Ovary (tissue), 10 donors: ENCODE measurements at regions of chr14 and their contacts with region 1.

Region 1: DNA sequence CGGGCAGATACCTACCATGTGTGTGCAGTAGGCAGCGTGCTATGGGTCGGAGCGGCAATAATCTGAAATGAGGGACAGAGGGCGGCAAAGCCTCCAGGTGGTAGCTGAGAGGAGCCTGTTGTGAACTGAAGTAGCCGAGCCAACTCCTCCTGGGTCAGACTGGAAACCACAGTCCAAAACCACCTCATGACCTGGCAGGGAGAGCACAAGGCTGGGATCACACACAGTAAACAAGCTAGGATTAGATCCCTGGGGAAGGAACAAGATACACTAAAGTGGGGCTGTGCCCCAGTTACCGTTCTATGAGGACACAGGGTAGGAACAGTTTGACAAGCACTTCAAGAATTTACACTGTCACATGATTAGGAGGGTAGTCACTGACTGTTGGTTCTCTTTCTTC is 49.0 kb downstream of the AREL1 start:
- DNase-seq: no peak
- H3K4me3 ChIP-seq: no peak overlapping the region
- H3K27ac ChIP-seq: no peak overlapping the region
- H3K4me1 ChIP-seq: no peaks in the 10 kb centered on the region
- H3K27me3 ChIP-seq: no peaks in the 10 kb centered on the region
- CTCF ChIP-seq: no peak
- EP300 ChIP-seq: no peak
- POLR2A ChIP-seq: no peak

Region 2: DNA sequence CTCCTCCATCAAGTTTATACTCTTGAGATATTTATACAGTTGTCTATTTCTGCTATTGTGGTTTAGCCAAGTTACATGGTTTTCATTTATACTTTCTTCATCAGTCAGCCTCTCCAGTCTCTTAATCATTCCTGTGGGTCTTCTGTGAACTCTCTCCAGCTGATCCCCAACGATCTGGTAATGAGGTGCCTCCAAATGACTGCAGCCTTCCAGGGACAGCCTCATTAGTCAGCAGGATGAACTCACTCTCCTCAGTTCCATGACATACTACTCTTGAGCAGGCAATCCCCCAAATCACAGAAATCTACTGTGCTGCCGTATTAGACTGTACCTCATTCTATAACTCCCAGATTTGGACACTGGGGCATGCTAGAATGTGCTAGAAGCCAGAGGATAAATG is 33.7 kb after region 1 on chr14:
- intact Hi-C with region 1: loop called in 2 of 4 experiments (anchors 5 to 10 kb)
- DNase-seq: no peak
- H3K4me3 ChIP-seq: no peak overlapping the region
- H3K27ac ChIP-seq: no peak overlapping the region
- H3K4me1 ChIP-seq: peaks cover 7% of the 10 kb centered on the region
- H3K27me3 ChIP-seq: no peaks in the 10 kb centered on the region
- CTCF ChIP-seq: no peak
- EP300 ChIP-seq: no peak
- POLR2A ChIP-seq: no peak

Region 3: DNA sequence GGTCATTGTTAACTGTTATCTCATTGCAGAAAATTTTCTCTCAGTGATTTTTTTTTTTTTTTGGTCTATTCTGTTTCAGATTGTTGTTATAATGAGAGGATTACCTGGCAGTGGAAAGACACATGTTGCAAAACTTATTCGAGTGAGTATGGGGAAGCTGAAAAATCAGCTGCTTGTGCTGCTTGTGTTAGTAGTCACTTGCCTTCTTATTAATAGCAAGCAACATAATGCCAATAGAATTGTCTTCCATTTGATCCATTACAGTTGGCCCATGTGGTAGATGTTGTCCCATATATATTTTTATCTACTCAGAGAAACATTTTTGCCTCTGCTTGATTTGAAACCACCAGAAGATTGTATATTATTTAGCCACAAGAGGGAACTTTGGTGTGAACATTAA is 152.2 kb after region 1 on chr14:
- intact Hi-C with region 1: no loop called
- DNase-seq: no peak
- H3K4me3 ChIP-seq: no peak overlapping the region
- H3K27ac ChIP-seq: no peak overlapping the region
- H3K4me1 ChIP-seq: no peaks in the 10 kb centered on the region
- H3K27me3 ChIP-seq: no peaks in the 10 kb centered on the region
- CTCF ChIP-seq: no peak
- EP300 ChIP-seq: no peak
- POLR2A ChIP-seq: no peak

Region 4: GRCh38 chr14:75063407-75064213 is 399.7 kb after region 1 on chr14 and contains the start of gene ACYP1:
- intact Hi-C with region 1: no loop called
- DNase-seq: peak; percentile 89 to 97 (median 96)
- H3K4me3 ChIP-seq: peak within 1 kb of the TSS; percentile 75
- H3K27ac ChIP-seq: peak within 1 kb of the TSS in 1 of 2 donors; percentile 52
- H3K4me1 ChIP-seq: peaks cover 9% of the 10 kb centered on the region
- H3K27me3 ChIP-seq: no peaks in the 10 kb centered on the region
- CTCF ChIP-seq: no peak
- EP300 ChIP-seq: no peak
- POLR2A ChIP-seq: peak; percentile 30
- total RNA-seq, gene ACYP1: 5.5 to 27.7 (median 11.2) TPM